Gastrocnemius medialis (tissue), 4 donors: ENCODE measurements at regions of chr4 and their contacts with region 1.

Region 1: GRCh38 chr4:70687821-70688794 is at the start of gene UTP3:
- DNase-seq: peak; percentile 92 to 93
- ATAC-seq: peak; percentile 98
- H3K4me3 ChIP-seq: peak within 1 kb of the TSS; percentile 82 to 93 (median 90)
- H3K27ac ChIP-seq: peak within 1 kb of the TSS; percentile 90 to 96 (median 94)
- H3K4me1 ChIP-seq: peaks cover 27 to 37% of the 10 kb centered on the region in 2 donors
- H3K27me3 ChIP-seq: no peaks in the 10 kb centered on the region
- CTCF ChIP-seq: peak; percentile 92 to 98 (median 96)
- POLR2A ChIP-seq: peak; percentile 71 to 80
- total RNA-seq, gene UTP3: 6.3 to 13.0 (median 11.8) TPM

Region 2: GRCh38 chr4:69858690-69859089 is 829.4 kb before region 1 on chr4:
- in situ Hi-C with region 1: no loop called
- intact Hi-C with region 1: no loop called
- DNase-seq: no peak
- ATAC-seq: no peak
- H3K4me3 ChIP-seq: no peak overlapping the region
- H3K27ac ChIP-seq: no peak overlapping the region
- H3K4me1 ChIP-seq: no peaks in the 10 kb centered on the region
- H3K27me3 ChIP-seq: no peaks in the 10 kb centered on the region
- CTCF ChIP-seq: no peak
- POLR2A ChIP-seq: no peak

Region 3: GRCh38 chr4:70601422-70602039 is 86.6 kb before region 1 on chr4:
- in situ Hi-C with region 1: no loop called
- intact Hi-C with region 1: loop called (anchors 1 kb)
- DNase-seq: peak; percentile 18 to 46
- ATAC-seq: peak; percentile 80 to 90
- H3K4me3 ChIP-seq: no peak overlapping the region
- H3K27ac ChIP-seq: no peak overlapping the region
- H3K4me1 ChIP-seq: no peaks in the 10 kb centered on the region
- H3K27me3 ChIP-seq: no peaks in the 10 kb centered on the region
- CTCF ChIP-seq: peak; percentile 57 to 88 (median 71)
- POLR2A ChIP-seq: no peak

Region 4: GRCh38 chr4:70629469-70630090 is 58.5 kb before region 1 on chr4:
- in situ Hi-C with region 1: no loop called
- intact Hi-C with region 1: no loop called
- DNase-seq: no peak
- ATAC-seq: no peak
- H3K4me3 ChIP-seq: no peak overlapping the region
- H3K27ac ChIP-seq: no peak overlapping the region
- H3K4me1 ChIP-seq: no peaks in the 10 kb centered on the region
- H3K27me3 ChIP-seq: no peaks in the 10 kb centered on the region
- CTCF ChIP-seq: no peak
- POLR2A ChIP-seq: no peak

Region 5: DNA sequence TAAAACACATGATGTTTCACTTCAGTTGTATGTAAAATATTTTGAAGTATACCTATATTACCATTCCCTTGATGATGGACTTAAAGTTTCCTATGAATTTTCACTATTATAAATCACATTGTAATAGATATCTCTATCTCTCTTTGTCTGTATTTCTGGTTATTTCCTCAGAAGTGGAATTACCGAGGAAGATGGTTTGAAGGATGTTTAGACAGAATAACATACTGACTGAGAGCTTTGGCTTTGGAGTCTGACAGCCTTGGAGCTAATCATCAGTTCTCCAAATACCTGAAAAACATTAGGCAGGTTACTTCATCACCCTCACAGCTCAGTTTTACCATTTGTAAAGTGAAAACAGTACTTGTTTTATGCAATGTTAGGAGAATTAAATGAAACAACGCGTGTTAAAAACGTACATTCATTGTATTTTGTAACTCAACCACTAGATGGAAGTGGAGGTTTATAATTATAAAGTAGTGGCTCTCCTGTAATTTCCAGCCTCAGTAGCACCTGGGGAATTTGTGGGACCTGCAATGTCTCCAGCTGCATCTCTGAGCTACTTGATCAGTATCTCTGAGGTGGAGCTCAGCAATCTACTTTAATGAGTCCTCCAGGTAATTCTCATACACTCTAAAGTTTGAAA is 36.1 kb before region 1 on chr4:
- in situ Hi-C with region 1: no loop called
- intact Hi-C with region 1: loop called (anchors 5 kb)
- DNase-seq: no peak
- ATAC-seq: peak in 1 of 2 donors; percentile 51
- H3K4me3 ChIP-seq: no peak overlapping the region
- H3K27ac ChIP-seq: no peak overlapping the region
- H3K4me1 ChIP-seq: peaks cover 0 to 4% of the 10 kb centered on the region in 2 donors
- H3K27me3 ChIP-seq: no peaks in the 10 kb centered on the region
- CTCF ChIP-seq: peak; percentile 36 to 57 (median 43)
- POLR2A ChIP-seq: no peak

Region 6: GRCh38 chr4:70839589-70840093 is 151.5 kb after region 1 on chr4 and contains the start of gene GRSF1:
- in situ Hi-C with region 1: no loop called
- intact Hi-C with region 1: loop called (anchors 2 kb)
- DNase-seq: peak; percentile 94
- ATAC-seq: peak; percentile 89 to 91
- H3K4me3 ChIP-seq: peak within 1 kb of the TSS; percentile 68 to 96 (median 78)
- H3K27ac ChIP-seq: peak within 1 kb of the TSS; percentile 86 to 98 (median 92)
- H3K4me1 ChIP-seq: peaks cover 23 to 29% of the 10 kb centered on the region in 2 donors
- H3K27me3 ChIP-seq: no peaks in the 10 kb centered on the region
- CTCF ChIP-seq: peak in 2 of 5 experiments; percentile 8 to 11
- POLR2A ChIP-seq: peak; percentile 71 to 84
- total RNA-seq, gene GRSF1: 121 to 158 (median 140) TPM

Region 7: GRCh38 chr4:70993181-70994068 is 305.3 kb after region 1 on chr4 and contains the start of gene DCK:
- in situ Hi-C with region 1: loop called in 1 of 4 experiments (anchors 25 kb)
- intact Hi-C with region 1: loop called (anchors 2 kb)
- DNase-seq: peak; percentile 72 to 83
- ATAC-seq: peak; percentile 95 to 96
- H3K4me3 ChIP-seq: peak within 1 kb of the TSS; percentile 83 to 90 (median 87)
- H3K27ac ChIP-seq: peak within 1 kb of the TSS; percentile 82 to 90 (median 88)
- H3K4me1 ChIP-seq: peaks cover 13 to 16% of the 10 kb centered on the region in 2 donors
- H3K27me3 ChIP-seq: no peaks in the 10 kb centered on the region
- CTCF ChIP-seq: no peak
- POLR2A ChIP-seq: peak; percentile 53 to 60
- total RNA-seq, gene DCK: 6.3 to 17.2 (median 11.8) TPM